Natural killer cell (primary cell): ENCODE measurements at regions of chr21 and their contacts with region 1.

Region 1: GRCh38 chr21:24514081-24514733 is 1093.1 kb downstream of the MRPL39 start:
- DNase-seq: peak in 1 of 2 donors; percentile 12
- ATAC-seq: no peak
- H3K4me3 ChIP-seq: no peak overlapping the region
- H3K4me3 Mint-ChIP-seq: no peak overlapping the region
- H3K27ac ChIP-seq: no peak overlapping the region
- H3K27ac Mint-ChIP-seq: no peak overlapping the region
- H3K4me1 ChIP-seq: no peaks in the 10 kb centered on the region
- H3K4me1 Mint-ChIP-seq: no peaks in the 10 kb centered on the region
- H3K27me3 ChIP-seq: no peaks in the 10 kb centered on the region
- H3K27me3 Mint-ChIP-seq: no peaks in the 10 kb centered on the region
- CTCF ChIP-seq: peak; percentile 62

Region 2: GRCh38 chr21:24375201-24375600 is 139.0 kb before region 1 on chr21:
- intact Hi-C with region 1: loop called (anchors 5 kb)
- DNase-seq: peak in 1 of 2 donors; percentile 15
- ATAC-seq: peak in 1 of 3 donors; percentile 21
- H3K4me3 ChIP-seq: no peak overlapping the region
- H3K4me3 Mint-ChIP-seq: no peak overlapping the region
- H3K27ac ChIP-seq: no peak overlapping the region
- H3K27ac Mint-ChIP-seq: no peak overlapping the region
- H3K4me1 ChIP-seq: no peaks in the 10 kb centered on the region
- H3K4me1 Mint-ChIP-seq: peaks cover 0 to 5% of the 10 kb centered on the region in 2 donors
- H3K27me3 ChIP-seq: no peaks in the 10 kb centered on the region
- H3K27me3 Mint-ChIP-seq: no peaks in the 10 kb centered on the region
- CTCF ChIP-seq: no peak

Region 3: GRCh38 chr21:24594082-24594481 is 79.9 kb after region 1 on chr21:
- intact Hi-C with region 1: no loop called
- DNase-seq: no peak
- ATAC-seq: no peak
- H3K4me3 ChIP-seq: no peak overlapping the region
- H3K4me3 Mint-ChIP-seq: no peak overlapping the region
- H3K27ac ChIP-seq: no peak overlapping the region
- H3K27ac Mint-ChIP-seq: no peak overlapping the region
- H3K4me1 ChIP-seq: no peaks in the 10 kb centered on the region
- H3K4me1 Mint-ChIP-seq: no peaks in the 10 kb centered on the region
- H3K27me3 ChIP-seq: no peaks in the 10 kb centered on the region
- H3K27me3 Mint-ChIP-seq: no peaks in the 10 kb centered on the region
- CTCF ChIP-seq: no peak